ENCODE measurements at regions of chrX and their contacts with region 1.

Region 1: DNA sequence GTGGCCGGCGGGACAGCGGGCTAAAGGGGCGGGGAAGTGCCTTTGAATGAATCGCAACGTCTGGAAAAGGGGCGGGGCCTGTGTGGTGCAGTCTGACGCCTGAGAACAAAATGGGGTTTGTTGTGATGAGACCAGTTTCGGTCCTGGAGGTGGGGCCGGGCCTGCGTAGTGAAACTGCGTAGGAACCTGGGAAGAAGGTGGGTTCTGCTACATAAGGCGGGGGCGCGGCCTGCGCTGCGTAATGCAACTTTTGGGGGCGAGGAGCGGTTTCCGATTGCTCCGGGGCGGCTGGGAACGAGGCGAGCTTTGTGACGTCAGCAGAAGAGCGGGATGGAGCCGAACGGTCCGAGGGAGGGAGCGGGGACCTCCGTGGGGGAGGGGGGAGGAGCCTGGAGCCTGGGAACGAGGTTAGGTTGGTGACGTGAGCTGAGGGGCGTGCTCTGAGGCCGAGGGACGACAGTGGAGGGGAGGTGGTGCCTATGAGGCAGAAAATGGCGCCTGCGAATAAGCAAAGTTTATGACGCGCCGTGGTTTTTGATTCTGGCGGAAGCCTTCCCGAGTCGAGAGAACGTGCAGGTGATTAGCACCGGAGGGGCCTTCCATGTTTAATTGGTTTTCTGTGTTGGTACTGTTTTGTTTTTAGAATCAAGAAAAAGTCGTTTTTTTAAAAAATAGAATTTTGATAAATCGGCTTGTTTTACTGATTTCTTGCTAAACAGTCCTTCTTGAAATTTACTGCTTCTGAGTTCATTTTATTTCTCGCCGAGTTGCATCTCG is 716 bp downstream of the USP11 start:
- DNase-seq: peak; percentile 92
- ATAC-seq: peak; percentile 90
- H3K4me3 ChIP-seq: peak overlapping the region; percentile 64 to 67
- H3K27ac ChIP-seq: peak overlapping the region; percentile 90
- H3K4me1 ChIP-seq: peaks cover 3 to 19% of the 10 kb centered on the region in 2 experiments; a peak in 3 of 4 replicates
- H3K27me3 ChIP-seq: no peaks in the 10 kb centered on the region
- CTCF ChIP-seq: no peak
- POLR2A ChIP-seq: no peak
- RAD21 ChIP-seq: no peak

Region 2: DNA sequence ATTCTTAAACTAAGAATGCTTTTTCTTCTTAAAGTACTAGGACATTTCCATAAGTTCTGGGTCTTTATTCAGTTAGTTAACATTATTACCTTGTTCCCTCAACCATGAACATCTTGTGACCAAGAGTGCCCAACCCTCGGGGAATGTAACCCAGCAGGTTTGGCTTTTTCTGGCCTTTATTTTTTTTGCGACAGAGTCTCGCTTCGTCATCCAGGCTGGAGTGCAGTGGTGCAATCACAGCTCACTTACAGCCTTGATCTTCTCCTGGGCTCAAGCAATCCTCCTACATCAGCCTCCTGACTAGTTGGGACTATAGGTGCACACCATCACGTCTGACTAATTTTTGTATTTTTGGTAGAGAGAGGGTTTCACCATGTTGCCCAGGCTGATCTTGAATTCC is 64.3 kb after region 1 on chrX:
- CTCF ChIA-PET with region 1: no interaction called
- POLR2A ChIA-PET with region 1: no interaction called
- RAD21 ChIA-PET with region 1: no interaction called
- intact Hi-C with region 1: loop called (anchors 10 kb)
- DNase-seq: peak; percentile 23
- ATAC-seq: peak; percentile 49
- H3K4me3 ChIP-seq: no peak overlapping the region
- H3K27ac ChIP-seq: no peak overlapping the region
- H3K4me1 ChIP-seq: peaks cover 8 to 31% of the 10 kb centered on the region in 2 experiments; a peak in 3 of 4 replicates
- H3K27me3 ChIP-seq: no peaks in the 10 kb centered on the region
- CTCF ChIP-seq: no peak
- POLR2A ChIP-seq: no peak
- RAD21 ChIP-seq: no peak